Caco-2 (cell line): ENCODE measurements at regions of chr16 and their contacts with region 1.

Region 1: GRCh38 chr16:67017810-67018488 is 11.0 kb upstream of the CBFB start:
- DNase-seq: peak; percentile 95 to 97
- H3K4me3 ChIP-seq: no peak overlapping the region
- H3K4me3 Mint-ChIP-seq: no peak overlapping the region
- H3K27ac Mint-ChIP-seq: no peak overlapping the region
- H3K4me1 ChIP-seq: peaks cover 17% of the 10 kb centered on the region
- H3K4me1 Mint-ChIP-seq: peaks cover 19% of the 10 kb centered on the region
- H3K27me3 ChIP-seq: no peaks in the 10 kb centered on the region
- H3K27me3 Mint-ChIP-seq: no peaks in the 10 kb centered on the region
- CTCF ChIP-seq: peak; percentile 87 to 88

Region 2: DNA sequence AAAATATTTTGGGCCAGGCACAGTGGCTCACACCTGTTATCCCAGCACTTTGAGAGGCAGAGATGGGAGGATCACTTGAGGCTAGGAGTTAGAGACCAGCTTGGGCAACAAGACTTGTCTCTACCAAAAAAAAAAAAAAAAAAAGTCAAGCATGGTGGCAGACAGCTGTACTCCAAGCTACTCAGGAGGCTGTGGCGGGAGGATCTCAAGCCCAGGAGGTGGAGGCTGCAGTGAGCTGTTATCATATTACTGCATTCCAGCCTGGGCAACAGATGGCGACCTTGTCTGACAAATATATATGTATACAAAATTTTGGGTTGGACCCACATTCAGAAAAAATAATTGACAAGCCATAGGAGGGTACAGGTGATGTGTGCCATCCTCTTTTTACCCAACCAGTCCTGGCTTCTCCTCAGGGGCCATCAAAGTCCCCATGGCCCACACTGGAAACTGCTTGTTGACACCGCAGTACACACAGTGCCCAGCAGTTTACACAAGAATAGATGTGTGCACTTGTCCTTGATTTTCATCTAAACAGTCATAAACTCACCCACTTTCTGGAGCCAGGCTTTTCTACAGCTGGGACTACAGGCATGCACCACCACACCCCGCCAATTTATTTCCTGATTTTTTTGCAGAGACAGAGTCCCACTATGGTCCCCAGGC is 80.9 kb before region 1 on chr16:
- CTCF ChIA-PET with region 1: no interaction called
- POLR2A ChIA-PET with region 1: no interaction called
- intact Hi-C with region 1: no loop called
- DNase-seq: no peak
- H3K4me3 ChIP-seq: no peak overlapping the region
- H3K4me3 Mint-ChIP-seq: peak overlapping the region; percentile 94
- H3K27ac Mint-ChIP-seq: no peak overlapping the region
- H3K4me1 ChIP-seq: peaks cover 8% of the 10 kb centered on the region
- H3K4me1 Mint-ChIP-seq: peaks cover 19% of the 10 kb centered on the region
- H3K27me3 ChIP-seq: no peaks in the 10 kb centered on the region
- H3K27me3 Mint-ChIP-seq: no peaks in the 10 kb centered on the region
- CTCF ChIP-seq: no peak

Region 3: DNA sequence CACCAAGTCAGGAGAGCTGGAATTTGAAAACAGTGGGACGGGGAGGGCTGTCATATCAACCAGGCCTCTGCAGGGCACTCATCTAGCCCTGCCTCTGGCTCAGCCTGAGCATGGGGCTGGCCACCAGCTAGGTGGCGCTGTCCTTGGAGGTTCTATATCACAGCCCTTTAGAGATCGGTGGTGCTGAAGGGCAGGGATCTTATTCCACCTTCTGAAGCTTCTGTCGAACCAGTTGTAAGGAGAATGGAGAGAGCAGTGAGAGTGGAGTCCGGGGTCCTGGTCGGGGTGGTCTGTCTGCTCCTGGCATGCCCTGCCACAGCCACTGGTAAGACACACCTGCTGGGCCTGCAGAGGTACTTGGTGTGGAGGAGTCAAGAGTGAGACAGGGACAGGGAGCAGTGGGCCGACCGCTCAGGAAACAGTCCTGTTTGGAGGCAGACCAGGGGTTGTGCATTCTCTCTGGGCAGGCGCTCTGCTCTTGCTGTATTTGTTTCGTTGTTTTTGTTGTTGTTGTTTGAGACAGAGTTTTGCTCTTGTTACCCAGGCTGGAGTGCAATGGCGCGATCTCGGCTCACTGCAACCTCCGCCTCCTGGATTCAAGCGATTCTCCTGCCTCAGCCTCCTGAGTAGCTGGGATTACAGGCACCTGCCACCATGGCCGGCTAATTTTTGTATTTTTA is 56.7 kb before region 1 on chr16 and contains the start of gene CES3:
- CTCF ChIA-PET with region 1: interaction called, 12 read pairs
- POLR2A ChIA-PET with region 1: no interaction called
- intact Hi-C with region 1: no loop called
- DNase-seq: peak; percentile 80 to 83
- H3K4me3 ChIP-seq: no peak within 1 kb of the TSS
- H3K4me3 Mint-ChIP-seq: peak within 1 kb of the TSS; percentile 9
- H3K27ac Mint-ChIP-seq: no peak within 1 kb of the TSS
- H3K4me1 ChIP-seq: no peaks in the 10 kb centered on the region
- H3K4me1 Mint-ChIP-seq: no peaks in the 10 kb centered on the region
- H3K27me3 ChIP-seq: no peaks in the 10 kb centered on the region
- H3K27me3 Mint-ChIP-seq: peaks cover 7% of the 10 kb centered on the region
- CTCF ChIP-seq: peak; percentile 78 to 94
- total RNA-seq, gene CES3: 0.79 and 0.95 TPM in 2 replicates

Region 4: GRCh38 chr16:67040906-67041305 is 23.0 kb after region 1 on chr16:
- CTCF ChIA-PET with region 1: interaction called, 11 read pairs
- POLR2A ChIA-PET with region 1: no interaction called
- intact Hi-C with region 1: no loop called
- DNase-seq: no peak
- H3K4me3 ChIP-seq: no peak overlapping the region
- H3K4me3 Mint-ChIP-seq: no peak overlapping the region
- H3K27ac Mint-ChIP-seq: no peak overlapping the region
- H3K4me1 ChIP-seq: no peaks in the 10 kb centered on the region
- H3K4me1 Mint-ChIP-seq: no peaks in the 10 kb centered on the region
- H3K27me3 ChIP-seq: no peaks in the 10 kb centered on the region
- H3K27me3 Mint-ChIP-seq: no peaks in the 10 kb centered on the region
- CTCF ChIP-seq: no peak

Region 5: GRCh38 chr16:67150833-67151396 is 133.0 kb after region 1 on chr16 and contains the start of gene B3GNT9:
- CTCF ChIA-PET with region 1: interaction called, 57 read pairs
- POLR2A ChIA-PET with region 1: interaction called, 6 read pairs
- intact Hi-C with region 1: loop called (anchors 1 kb)
- DNase-seq: peak; percentile 69 to 76
- H3K4me3 ChIP-seq: peak within 1 kb of the TSS; percentile 75
- H3K4me3 Mint-ChIP-seq: peak within 1 kb of the TSS; percentile 81
- H3K27ac Mint-ChIP-seq: peak within 1 kb of the TSS; percentile 85
- H3K4me1 ChIP-seq: peaks cover 4% of the 10 kb centered on the region
- H3K4me1 Mint-ChIP-seq: no peaks in the 10 kb centered on the region
- H3K27me3 ChIP-seq: no peaks in the 10 kb centered on the region
- H3K27me3 Mint-ChIP-seq: no peaks in the 10 kb centered on the region
- CTCF ChIP-seq: no peak
- total RNA-seq, gene B3GNT9: 11.6 and 11.7 TPM in 2 replicates

Region 6: DNA sequence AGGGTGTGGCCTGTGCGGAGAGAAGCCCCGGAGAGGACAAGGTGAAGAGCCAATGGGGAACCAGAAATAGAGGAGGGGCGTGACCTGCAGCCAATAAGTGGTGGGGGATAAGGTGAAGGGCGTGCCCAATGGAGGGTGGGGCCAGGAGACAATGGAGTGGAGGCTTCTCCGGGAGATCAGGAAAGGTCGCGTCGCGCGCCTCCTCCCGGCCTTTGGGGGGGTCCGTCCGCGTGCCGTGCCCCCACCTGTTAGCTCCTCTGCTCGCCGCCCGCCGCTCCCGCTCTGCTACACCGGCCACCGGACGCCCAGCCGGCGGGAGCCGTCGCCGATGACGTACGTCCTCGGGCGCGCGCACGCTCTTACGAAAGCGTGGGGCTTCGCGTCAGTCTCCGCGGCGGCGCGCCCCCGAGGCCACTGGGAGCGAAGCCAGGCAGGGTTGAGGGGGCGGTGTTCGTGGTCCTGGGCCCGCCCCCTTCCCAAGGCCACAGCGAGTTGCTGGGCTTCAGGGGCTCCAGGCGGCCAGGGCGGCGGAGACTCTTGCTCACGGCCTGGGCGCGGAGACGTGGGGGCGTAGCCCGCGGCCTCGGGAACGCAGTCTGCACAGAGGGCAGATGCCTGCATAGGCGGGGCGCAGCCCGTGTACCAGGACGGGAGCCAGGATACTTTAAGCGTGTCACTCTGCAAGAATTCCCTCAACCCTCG is 165.8 kb after region 1 on chr16 and contains the start of gene MATCAP1:
- CTCF ChIA-PET with region 1: interaction called, 39 read pairs
- POLR2A ChIA-PET with region 1: no interaction called
- intact Hi-C with region 1: loop called (anchors 1 kb)
- DNase-seq: peak; percentile 98 to 99
- H3K4me3 ChIP-seq: peak within 1 kb of the TSS; percentile 90
- H3K4me3 Mint-ChIP-seq: no peak within 1 kb of the TSS
- H3K27ac Mint-ChIP-seq: no peak within 1 kb of the TSS
- H3K4me1 ChIP-seq: peaks cover 40% of the 10 kb centered on the region
- H3K4me1 Mint-ChIP-seq: peaks cover 12% of the 10 kb centered on the region
- H3K27me3 ChIP-seq: no peaks in the 10 kb centered on the region
- H3K27me3 Mint-ChIP-seq: peaks cover 3% of the 10 kb centered on the region
- CTCF ChIP-seq: no peak
- total RNA-seq, gene MATCAP1: 22.2 and 28.6 TPM in 2 replicates

Region 7: GRCh38 chr16:67194260-67194659 is 176.3 kb after region 1 on chr16:
- CTCF ChIA-PET with region 1: no interaction called
- POLR2A ChIA-PET with region 1: no interaction called
- intact Hi-C with region 1: no loop called
- DNase-seq: no peak
- H3K4me3 ChIP-seq: no peak overlapping the region
- H3K4me3 Mint-ChIP-seq: peak overlapping the region; percentile 77
- H3K27ac Mint-ChIP-seq: peak overlapping the region; percentile 25
- H3K4me1 ChIP-seq: peaks cover 28% of the 10 kb centered on the region
- H3K4me1 Mint-ChIP-seq: peaks cover 25% of the 10 kb centered on the region
- H3K27me3 ChIP-seq: no peaks in the 10 kb centered on the region
- H3K27me3 Mint-ChIP-seq: no peaks in the 10 kb centered on the region
- CTCF ChIP-seq: no peak